Activated naive CD4-positive, alpha-beta T cell treated with anti-CD3 and anti-CD28 coated beads for 36 hours (primary cell): ENCODE measurements at regions of chr1 and their contacts with region 1.

Region 1: DNA sequence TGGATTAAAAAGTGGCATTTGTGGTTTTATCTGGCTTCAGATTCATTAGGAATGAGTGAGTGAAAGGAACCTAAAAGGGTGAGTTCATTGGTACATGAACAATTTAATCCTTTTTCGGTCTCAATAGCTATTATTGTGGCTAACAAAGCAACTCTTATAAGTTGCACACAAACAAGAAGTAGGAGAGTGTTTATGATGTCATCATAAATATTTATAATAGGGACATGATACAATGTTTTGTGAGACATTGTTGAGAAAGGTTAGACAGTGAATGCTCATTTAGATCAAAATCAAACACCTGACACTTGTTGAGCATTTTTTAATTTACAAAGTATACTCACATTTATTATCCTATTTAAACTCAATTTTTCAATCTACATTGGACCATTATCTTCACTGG is 363.4 kb downstream of the PDE4B start:
- DNase-seq: no peak
- H3K4me3 Mint-ChIP-seq: no peak overlapping the region
- H3K27ac Mint-ChIP-seq: no peak overlapping the region
- H3K4me1 Mint-ChIP-seq: no peaks in the 10 kb centered on the region
- H3K27me3 Mint-ChIP-seq: peaks cover 32% of the 10 kb centered on the region

Region 2: DNA sequence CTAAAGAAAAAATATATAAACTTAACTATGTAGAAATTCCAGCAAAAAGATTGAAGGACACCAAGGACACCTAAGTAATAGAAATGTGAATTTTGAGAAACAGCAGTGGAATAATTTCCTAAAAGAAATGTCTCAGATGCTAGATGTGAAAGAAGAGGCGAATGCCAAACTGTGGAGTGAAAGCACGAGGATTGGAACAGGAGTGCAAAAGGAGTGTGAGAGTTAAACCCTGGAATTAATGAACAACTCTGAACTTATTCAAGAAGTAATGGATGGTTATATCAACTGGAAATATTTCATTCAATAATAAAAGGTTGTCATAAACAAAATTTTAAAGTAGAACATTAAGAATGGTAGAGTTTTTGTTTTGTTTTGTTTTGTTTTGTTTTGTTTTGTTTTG is 299.3 kb after region 1 on chr1:
- CTCF ChIA-PET with region 1: no interaction called
- intact Hi-C with region 1: loop called (anchors 5 kb)
- DNase-seq: no peak
- H3K4me3 Mint-ChIP-seq: no peak overlapping the region
- H3K27ac Mint-ChIP-seq: no peak overlapping the region
- H3K4me1 Mint-ChIP-seq: no peaks in the 10 kb centered on the region
- H3K27me3 Mint-ChIP-seq: no peaks in the 10 kb centered on the region